Adrenal gland (tissue), 19 donors: ENCODE measurements at regions of chr19 and their contacts with region 1.

Region 1: DNA sequence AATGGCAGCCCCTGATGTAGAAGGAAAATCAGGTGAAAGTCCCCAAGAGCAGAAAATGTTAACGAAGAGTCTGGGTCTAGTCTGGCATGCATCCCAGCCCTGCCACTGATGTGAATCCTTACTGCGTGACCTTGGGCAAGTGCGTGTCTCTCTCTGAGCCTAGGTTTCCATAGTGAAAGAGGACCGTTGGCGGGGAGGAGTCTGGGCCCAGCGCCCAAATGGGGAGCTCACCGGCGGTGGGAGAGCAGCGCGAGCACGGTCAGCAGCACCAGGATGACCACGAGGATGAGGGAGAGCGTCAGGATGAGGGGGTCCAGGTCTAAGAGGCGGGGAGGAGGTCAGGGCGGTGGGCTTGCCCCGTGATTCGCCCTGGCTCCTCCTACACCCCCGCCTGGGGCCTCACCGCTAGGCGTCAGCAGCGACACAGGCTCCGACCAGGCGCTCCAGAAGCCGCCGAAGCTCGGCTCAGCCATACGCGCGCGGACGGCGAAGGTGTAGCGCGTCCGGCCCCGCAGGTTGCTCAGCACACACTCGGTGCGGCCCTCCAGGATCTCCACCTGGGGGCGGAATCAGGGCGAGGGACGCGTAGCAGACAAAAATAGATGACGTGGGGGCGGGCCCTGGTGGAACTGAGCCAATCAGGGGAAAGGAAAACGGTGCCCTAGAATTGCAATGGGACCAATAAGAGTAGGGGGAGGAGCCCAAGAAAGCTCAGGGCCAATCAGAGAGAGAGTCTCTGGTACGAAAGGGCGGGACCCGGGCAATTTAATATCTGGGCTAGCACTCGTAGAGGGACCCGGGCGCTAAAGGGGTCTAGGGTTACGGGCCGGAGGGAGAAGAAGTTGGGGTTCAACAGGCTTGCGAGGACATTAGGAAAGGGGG is 3.2 kb downstream of the EPOR start:
- DNase-seq: peak; percentile 95 to 99 (median 97)
- H3K4me3 ChIP-seq: peak overlapping the region in 2 of 4 donors; percentile 44 to 68
- H3K27ac ChIP-seq: peak overlapping the region; percentile 73 to 97 (median 89)
- H3K4me1 ChIP-seq: peaks cover 38 to 65% of the 10 kb centered on the region in 2 donors
- H3K27me3 ChIP-seq: no peaks in the 10 kb centered on the region
- CTCF ChIP-seq: peak; percentile 50 to 83 (median 74)
- POLR2A ChIP-seq: peak; percentile 85 to 89

Region 2: DNA sequence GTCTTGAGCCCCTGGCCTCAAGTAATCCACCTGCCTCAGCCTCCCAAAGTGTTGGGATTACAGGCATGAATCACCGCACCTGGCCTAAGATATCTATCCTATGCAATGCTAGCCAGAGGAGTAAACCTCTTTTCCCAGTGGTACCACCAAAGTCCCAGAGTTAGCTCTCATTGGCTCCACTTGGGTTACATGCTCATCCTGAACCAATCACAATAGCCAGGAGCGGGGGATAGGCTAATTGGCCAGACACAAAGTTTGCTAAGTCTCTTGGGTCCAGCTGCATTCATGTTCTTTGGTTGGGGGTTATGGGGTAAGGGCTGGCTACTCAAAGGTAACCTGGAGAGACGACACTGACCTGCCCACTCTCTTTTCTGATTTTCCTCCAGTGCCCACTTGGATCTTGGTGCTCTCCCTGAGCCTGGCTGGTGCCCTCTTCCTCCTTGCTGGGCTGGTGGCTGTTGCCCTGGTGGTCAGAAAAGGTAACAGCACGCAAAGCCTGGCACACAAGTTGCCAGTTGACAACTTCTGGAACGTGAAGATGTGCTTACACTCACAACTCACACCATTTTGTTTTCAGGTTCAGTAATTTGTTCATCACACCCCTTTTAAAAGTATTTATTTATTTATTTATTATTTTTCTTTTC is 524.9 kb before region 1 on chr19:
- intact Hi-C with region 1: no loop called
- DNase-seq: no peak
- H3K4me3 ChIP-seq: no peak overlapping the region
- H3K27ac ChIP-seq: no peak overlapping the region
- H3K4me1 ChIP-seq: no peaks in the 10 kb centered on the region
- H3K27me3 ChIP-seq: no peaks in the 10 kb centered on the region
- CTCF ChIP-seq: peak; percentile 37 to 42 (median 38)
- POLR2A ChIP-seq: no peak

Region 3: GRCh38 chr19:11434736-11435057 is 53.8 kb after region 1 on chr19:
- intact Hi-C with region 1: loop called (anchors 5 kb)
- DNase-seq: no peak
- H3K4me3 ChIP-seq: peak overlapping the region in 1 of 4 donors; percentile 81
- H3K27ac ChIP-seq: peak overlapping the region in 4 of 5 donors; percentile 51 to 87 (median 72)
- H3K4me1 ChIP-seq: peaks cover 12 to 17% of the 10 kb centered on the region in 2 donors
- H3K27me3 ChIP-seq: no peaks in the 10 kb centered on the region
- CTCF ChIP-seq: no peak
- POLR2A ChIP-seq: no peak

Region 4: GRCh38 chr19:11446652-11447301 is 65.9 kb after region 1 on chr19:
- intact Hi-C with region 1: loop called in 1 of 2 experiments (anchors 5 kb)
- DNase-seq: peak; percentile 54 to 71 (median 69)
- H3K4me3 ChIP-seq: no peak overlapping the region
- H3K27ac ChIP-seq: no peak overlapping the region
- H3K4me1 ChIP-seq: no peaks in the 10 kb centered on the region
- H3K27me3 ChIP-seq: no peaks in the 10 kb centered on the region
- CTCF ChIP-seq: peak; percentile 81 to 96 (median 90)
- POLR2A ChIP-seq: no peak

Region 5: GRCh38 chr19:11482384-11483050 is 101.6 kb after region 1 on chr19:
- intact Hi-C with region 1: loop called in 1 of 2 experiments (anchors 5 kb)
- DNase-seq: peak; percentile 79 to 91 (median 85)
- H3K4me3 ChIP-seq: peak overlapping the region in 1 of 4 donors; percentile 35
- H3K27ac ChIP-seq: peak overlapping the region in 2 of 5 donors; percentile 2 to 39
- H3K4me1 ChIP-seq: peaks cover 8 to 31% of the 10 kb centered on the region in 2 donors
- H3K27me3 ChIP-seq: peaks cover 16% of the 10 kb centered on the region
- CTCF ChIP-seq: peak; percentile 75 to 99 (median 92)
- POLR2A ChIP-seq: no peak